Aorta (tissue), 5 donors: ENCODE measurements at regions of chr1 and their contacts with region 1.

Region 1: GRCh38 chr1:58652651-58653184 is 47.1 kb downstream of the MYSM1 start:
- DNase-seq: peak in 1 of 2 donors; percentile 54
- ATAC-seq: peak; percentile 92
- H3K4me3 ChIP-seq: no peak overlapping the region
- H3K27ac ChIP-seq: no peak overlapping the region
- H3K4me1 ChIP-seq: no peaks in the 10 kb centered on the region
- H3K27me3 ChIP-seq: no peaks in the 10 kb centered on the region

Region 2: DNA sequence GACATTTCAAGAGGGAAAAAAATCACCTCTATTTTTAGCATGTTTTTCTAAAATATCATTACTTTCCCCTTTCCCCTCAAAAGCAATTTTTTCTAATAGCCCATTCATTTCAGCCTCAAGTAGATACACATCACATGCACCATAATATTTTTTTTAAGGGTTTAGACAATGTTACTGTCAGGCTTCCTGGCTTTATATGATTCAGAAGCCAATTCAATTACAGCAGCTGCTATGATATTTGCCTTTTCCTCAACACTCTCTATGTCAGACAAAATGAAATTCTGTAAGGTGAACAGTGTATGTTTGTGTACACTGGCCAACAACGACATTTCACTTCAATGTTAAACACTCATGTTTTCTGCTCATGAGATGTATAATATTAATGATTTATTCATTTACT is 152.7 kb before region 1 on chr1:
- intact Hi-C with region 1: no loop called
- DNase-seq: no peak
- ATAC-seq: no peak
- H3K4me3 ChIP-seq: no peak overlapping the region
- H3K27ac ChIP-seq: no peak overlapping the region
- H3K4me1 ChIP-seq: no peaks in the 10 kb centered on the region
- H3K27me3 ChIP-seq: no peaks in the 10 kb centered on the region

Region 3: GRCh38 chr1:58515794-58516401 is 136.8 kb before region 1 on chr1:
- intact Hi-C with region 1: loop called (anchors 1 to 2 kb)
- DNase-seq: no peak
- ATAC-seq: peak; percentile 83
- H3K4me3 ChIP-seq: no peak overlapping the region
- H3K27ac ChIP-seq: no peak overlapping the region
- H3K4me1 ChIP-seq: no peaks in the 10 kb centered on the region
- H3K27me3 ChIP-seq: no peaks in the 10 kb centered on the region

Region 4: DNA sequence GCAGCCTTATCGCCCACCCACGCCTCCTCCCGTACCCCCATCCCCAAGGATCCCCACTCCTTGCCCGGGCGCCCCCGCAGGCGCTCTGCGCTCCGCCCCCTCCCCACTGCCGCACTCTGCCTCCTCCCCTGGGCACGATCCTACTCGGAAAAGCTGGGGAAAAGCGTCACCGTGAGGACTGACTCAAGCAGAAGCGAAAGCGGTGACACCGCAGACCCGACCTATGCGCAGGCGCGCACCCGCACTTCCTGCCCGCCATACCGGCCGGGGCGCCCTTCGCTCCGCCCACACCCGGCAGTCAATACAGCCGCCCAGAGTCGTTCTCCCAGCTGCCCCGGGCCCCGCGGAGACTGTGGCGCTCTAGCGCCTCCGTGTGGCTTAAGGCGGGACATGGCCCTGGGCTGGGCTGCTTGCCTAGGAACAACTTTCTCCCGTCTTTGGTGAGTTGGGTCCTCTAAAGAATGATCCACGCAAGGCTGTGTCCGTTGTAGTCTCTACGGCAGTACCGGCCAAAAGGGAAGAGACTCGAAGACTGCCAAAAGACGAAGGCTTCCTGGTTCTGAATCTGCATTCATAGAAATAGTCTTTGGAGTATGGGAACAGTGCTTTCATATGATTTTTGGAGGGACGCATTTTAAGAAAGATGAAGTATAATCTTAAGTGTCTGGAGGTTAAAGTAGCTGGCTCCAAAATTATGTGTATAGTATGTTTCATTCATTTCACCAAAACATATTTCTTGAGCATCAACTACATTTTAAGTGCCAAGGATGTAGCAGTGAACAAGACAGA is 106.0 kb before region 1 on chr1 and contains the start of gene OMA1:
- intact Hi-C with region 1: loop called (anchors 2 to 10 kb)
- DNase-seq: peak; percentile 99
- ATAC-seq: peak; percentile 99
- H3K4me3 ChIP-seq: peak within 1 kb of the TSS; percentile 55 to 89
- H3K27ac ChIP-seq: peak within 1 kb of the TSS; percentile 87 to 94
- H3K4me1 ChIP-seq: peaks cover 0 to 2% of the 10 kb centered on the region in 2 donors
- H3K27me3 ChIP-seq: no peaks in the 10 kb centered on the region
- total RNA-seq, gene OMA1: 15.4 to 22.0 TPM

Region 5: GRCh38 chr1:58576727-58577653 is 75.7 kb before region 1 on chr1 and contains the start of gene TACSTD2:
- intact Hi-C with region 1: loop called in 1 of 2 experiments (anchors 5 kb)
- DNase-seq: peak; percentile 62 to 85
- ATAC-seq: peak; percentile 67
- H3K4me3 ChIP-seq: peak within 1 kb of the TSS in 1 of 2 donors; percentile 29
- H3K27ac ChIP-seq: no peak within 1 kb of the TSS
- H3K4me1 ChIP-seq: peaks cover 0 to 2% of the 10 kb centered on the region in 2 donors
- H3K27me3 ChIP-seq: no peaks in the 10 kb centered on the region
- total RNA-seq, gene TACSTD2: 4.6 to 4.8 TPM

Region 6: GRCh38 chr1:58592529-58593134 is 60.1 kb before region 1 on chr1:
- intact Hi-C with region 1: loop called in 1 of 2 experiments (anchors 2 kb)
- DNase-seq: peak; percentile 90 to 92
- ATAC-seq: peak; percentile 91
- H3K4me3 ChIP-seq: no peak overlapping the region
- H3K27ac ChIP-seq: peak overlapping the region; percentile 49 to 84
- H3K4me1 ChIP-seq: peaks cover 6 to 12% of the 10 kb centered on the region in 2 donors
- H3K27me3 ChIP-seq: no peaks in the 10 kb centered on the region